Motor neuron (in vitro differentiated cells): ENCODE measurements at regions of chr1 and their contacts with region 1.

Region 1: GRCh38 chr1:203480525-203481084 is 5.0 kb downstream of the PRELP start:
- ATAC-seq: peak; percentile 71 to 94 (median 85)
- H3K4me3 ChIP-seq: no peak overlapping the region
- H3K27ac ChIP-seq: no peak overlapping the region
- H3K4me1 ChIP-seq: peaks cover 3 to 13% of the 10 kb centered on the region in 2 donors

Region 2: GRCh38 chr1:203326830-203327683 is 153.5 kb before region 1 on chr1:
- in situ Hi-C with region 1: loop called in 3 of 9 experiments (anchors 25 kb)
- ATAC-seq: peak; percentile 85 to 93 (median 90)
- H3K4me3 ChIP-seq: peak overlapping the region; percentile 28 to 49 (median 31)
- H3K27ac ChIP-seq: peak overlapping the region; percentile 16 to 31
- H3K4me1 ChIP-seq: peaks cover 31 to 38% of the 10 kb centered on the region in 2 donors

Region 3: GRCh38 chr1:203340112-203340804 is 140.3 kb before region 1 on chr1:
- in situ Hi-C with region 1: loop called in 7 of 9 experiments (anchors 10 to 25 kb)
- ATAC-seq: peak; percentile 66 to 95 (median 90)
- H3K4me3 ChIP-seq: no peak overlapping the region
- H3K27ac ChIP-seq: no peak overlapping the region
- H3K4me1 ChIP-seq: peaks cover 12 to 13% of the 10 kb centered on the region in 2 donors

Region 4: DNA sequence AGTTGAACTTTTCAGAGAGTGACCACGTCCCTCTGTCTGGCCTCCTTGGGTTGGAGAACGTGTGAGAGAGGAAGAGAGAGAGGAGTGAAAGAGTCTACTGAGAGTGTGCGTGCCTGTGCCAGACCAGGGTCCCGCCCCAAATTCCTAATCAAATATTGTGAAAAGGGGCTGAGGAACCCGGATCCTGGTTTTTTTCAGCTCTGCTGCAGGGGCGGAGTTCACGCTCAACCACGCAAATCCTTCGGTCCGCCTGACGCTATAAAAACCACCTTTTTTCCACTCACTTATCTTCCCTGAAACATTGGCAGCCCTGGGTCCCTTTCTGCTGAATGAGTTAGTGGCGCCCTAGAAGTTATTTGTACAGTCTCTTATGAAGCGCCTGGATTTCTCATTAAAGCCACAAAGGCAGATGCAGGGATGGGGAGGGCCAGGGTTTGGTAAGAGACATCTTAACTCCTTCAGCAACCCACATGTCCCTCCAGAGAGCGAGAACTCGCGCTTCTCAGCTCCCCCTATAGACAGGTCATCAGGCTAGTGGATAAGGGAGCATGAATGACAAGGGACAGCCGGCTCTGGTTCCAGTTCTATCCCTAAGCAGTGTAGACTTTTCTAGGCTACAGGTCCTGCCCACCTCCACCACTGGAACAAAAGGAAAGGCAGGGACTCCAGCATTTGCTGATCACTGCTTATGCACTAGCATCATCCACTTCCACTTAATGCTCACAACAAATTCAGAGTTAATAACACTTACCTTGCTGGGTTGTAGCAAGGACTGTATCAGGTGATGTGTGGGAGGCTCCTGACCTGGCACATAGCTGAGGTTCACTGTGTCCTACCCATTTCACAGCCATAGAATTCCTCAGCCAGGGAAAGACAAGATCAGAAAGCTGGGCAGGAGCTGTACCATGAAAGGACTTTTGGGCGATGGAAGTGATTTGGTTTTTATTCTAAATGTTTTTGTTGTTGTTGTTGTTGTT is 129.3 kb before region 1 on chr1 and contains the start of gene FMOD:
- in situ Hi-C with region 1: loop called in 8 of 9 experiments (anchors 10 to 25 kb)
- ATAC-seq: peak in 7 of 8 experiments; percentile 41 to 83 (median 78)
- H3K4me3 ChIP-seq: no peak within 1 kb of the TSS
- H3K27ac ChIP-seq: no peak within 1 kb of the TSS
- H3K4me1 ChIP-seq: peaks cover 2 to 4% of the 10 kb centered on the region in 2 donors
- total RNA-seq, gene FMOD: 0.05 to 57.9 (median 0.66) TPM

Region 5: DNA sequence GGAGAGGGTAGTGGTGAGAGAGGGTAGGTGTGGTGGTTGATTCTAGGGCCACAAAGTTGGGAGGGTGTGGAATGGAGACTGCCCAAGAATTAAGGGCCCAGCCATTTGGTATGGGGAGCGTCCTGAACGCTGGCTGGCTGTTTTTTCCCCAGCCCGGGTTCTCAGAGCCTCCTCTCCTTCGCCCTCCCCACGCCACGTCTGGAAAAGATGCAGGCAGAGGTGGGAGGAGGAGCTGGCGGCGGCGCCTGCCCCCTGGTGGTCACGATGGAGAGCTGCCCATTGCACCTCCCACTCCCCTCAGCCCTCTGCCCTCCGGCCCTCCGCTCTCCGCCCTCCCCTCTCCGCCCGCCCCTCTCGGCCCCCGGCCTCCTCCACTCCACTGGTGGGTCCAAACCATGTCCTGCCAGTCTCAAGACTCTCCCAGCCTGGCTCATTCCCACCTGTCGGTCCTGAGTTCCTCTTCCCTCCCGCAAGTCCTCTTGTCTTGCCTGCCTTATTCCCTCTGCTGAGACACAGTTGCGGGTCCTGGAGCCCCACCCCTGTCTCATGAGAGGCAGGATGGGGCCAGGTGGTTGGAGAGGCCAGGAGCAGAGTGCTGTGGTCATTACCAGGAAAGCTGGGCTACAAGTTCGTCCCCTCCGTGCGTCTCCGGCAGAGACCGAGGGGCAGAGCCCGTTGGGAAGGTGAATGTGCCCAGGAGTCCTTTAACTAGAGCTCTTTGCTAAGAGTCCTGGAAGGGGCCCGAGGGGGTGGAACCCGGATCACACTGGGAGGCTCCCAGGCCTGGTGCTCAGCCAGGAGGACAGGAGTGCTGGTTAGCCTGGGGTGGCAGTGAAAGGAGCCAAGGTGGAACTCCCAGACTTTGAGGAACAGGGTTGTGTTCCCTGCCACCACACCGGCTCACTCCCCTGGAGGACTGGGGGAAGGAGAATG is 648.6 kb after region 1 on chr1:
- in situ Hi-C with region 1: loop called in 1 of 9 experiments (anchors 25 kb)
- ATAC-seq: peak; percentile 57 to 89 (median 80)
- H3K4me3 ChIP-seq: no peak overlapping the region
- H3K27ac ChIP-seq: peak overlapping the region in 1 of 2 donors; percentile 5
- H3K4me1 ChIP-seq: peaks cover 48 to 51% of the 10 kb centered on the region in 2 donors